GM12878 (cell line): ENCODE measurements at regions of chr11 and their contacts with region 1.

Region 1: GRCh38 chr11:96162816-96163499 is 180.0 kb downstream of the MAML2 start:
- DNase-seq: no peak
- ATAC-seq: no peak
- H3K4me3 ChIP-seq: no peak overlapping the region
- H3K27ac ChIP-seq: no peak overlapping the region
- H3K4me1 ChIP-seq: 0 out of 2 replicates have a peak, but pooled peaks cover 4% of the 10 kb centered on the region
- H3K27me3 ChIP-seq: no peaks in the 10 kb centered on the region
- CTCF ChIP-seq: no peak
- EP300 ChIP-seq: no peak
- POLR2A ChIP-seq: no peak
- RAD21 ChIP-seq: no peak

Region 2: DNA sequence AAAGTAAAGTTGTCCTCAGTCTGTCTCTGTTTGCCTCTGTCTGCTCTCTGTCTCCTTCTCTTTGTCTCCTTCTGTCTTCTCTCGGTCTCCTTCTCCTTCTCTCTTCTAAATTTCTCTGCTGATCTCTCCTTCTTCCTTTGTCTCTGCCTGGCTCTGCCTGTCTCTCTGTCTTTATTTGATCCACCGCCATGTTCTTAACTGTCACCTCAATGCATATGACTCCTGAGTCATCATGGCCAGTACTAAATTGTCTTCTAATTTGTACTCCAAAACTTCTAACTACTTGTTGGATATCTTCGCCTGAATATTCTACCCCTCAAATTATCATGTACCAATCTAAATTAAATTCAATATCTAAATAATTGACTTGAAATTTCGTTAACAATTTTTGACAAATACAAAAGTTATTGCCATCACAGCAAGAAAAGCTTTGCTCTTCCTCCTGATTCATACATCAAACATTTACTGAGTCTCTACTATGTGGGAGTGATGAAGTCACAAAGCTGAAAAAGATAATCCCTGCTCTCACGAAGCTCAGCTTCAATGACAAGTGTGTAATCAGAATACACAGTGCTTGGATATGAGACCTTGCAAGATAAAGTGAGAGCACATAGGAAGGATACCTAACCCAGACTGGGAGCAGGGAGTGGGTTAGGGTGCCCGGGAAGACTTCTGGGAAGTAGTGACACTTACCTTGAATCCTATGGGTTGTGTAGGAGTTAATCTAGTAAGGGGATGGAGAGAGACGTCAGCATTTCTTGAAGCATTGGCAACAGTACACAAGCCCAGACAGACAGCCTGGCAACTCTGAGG is 13.0 kb before region 1 on chr11:
- CTCF ChIA-PET with region 1: interaction called, 3 read pairs
- POLR2A ChIA-PET with region 1: no interaction called
- RAD21 ChIA-PET with region 1: no interaction called
- SMC1A ChIA-PET with region 1: interaction called, 13 read pairs
- in situ Hi-C with region 1: no loop called
- intact Hi-C with region 1: no loop called
- DNase-seq: no peak
- ATAC-seq: no peak
- H3K4me3 ChIP-seq: no peak overlapping the region
- H3K27ac ChIP-seq: no peak overlapping the region
- H3K4me1 ChIP-seq: peaks cover 13% of the 10 kb centered on the region
- H3K27me3 ChIP-seq: no peaks in the 10 kb centered on the region
- CTCF ChIP-seq: no peak
- EP300 ChIP-seq: no peak
- POLR2A ChIP-seq: no peak
- RAD21 ChIP-seq: no peak

Region 3: GRCh38 chr11:97414801-97415200 is 1251.8 kb after region 1 on chr11:
- CTCF ChIA-PET with region 1: no interaction called
- POLR2A ChIA-PET with region 1: no interaction called
- RAD21 ChIA-PET with region 1: no interaction called
- SMC1A ChIA-PET with region 1: no interaction called
- in situ Hi-C with region 1: no loop called
- intact Hi-C with region 1: no loop called
- DNase-seq: no peak
- ATAC-seq: no peak
- H3K4me3 ChIP-seq: no peak overlapping the region
- H3K27ac ChIP-seq: no peak overlapping the region
- H3K4me1 ChIP-seq: no peaks in the 10 kb centered on the region
- H3K27me3 ChIP-seq: no peaks in the 10 kb centered on the region
- CTCF ChIP-seq: no peak
- EP300 ChIP-seq: no peak
- POLR2A ChIP-seq: no peak
- RAD21 ChIP-seq: no peak